ENCODE measurements at regions of chr17 and their contacts with region 1.

Region 1: GRCh38 chr17:29293890-29294579 is at the start of gene NUFIP2:
- DNase-seq: peak; percentile 100
- H3K4me3 ChIP-seq: peak within 1 kb of the TSS; percentile 72 to 92
- H3K27ac ChIP-seq: peak within 1 kb of the TSS; percentile 92 to 99
- H3K4me1 ChIP-seq: peaks cover 6% of the 10 kb centered on the region
- H3K27me3 ChIP-seq: no peaks in the 10 kb centered on the region
- CTCF ChIP-seq: peak in 3 of 4 experiments; percentile 6 to 30 (median 13)
- POLR2A ChIP-seq: peak; percentile 100
- total RNA-seq, gene NUFIP2: 21.1 to 30.6 TPM

Region 2: GRCh38 chr17:29241015-29241963 is 52.7 kb before region 1 on chr17:
- intact Hi-C with region 1: loop called (anchors 5 kb)
- DNase-seq: no peak
- H3K4me3 ChIP-seq: no peak overlapping the region
- H3K27ac ChIP-seq: no peak overlapping the region
- H3K4me1 ChIP-seq: no peaks in the 10 kb centered on the region
- H3K27me3 ChIP-seq: no peaks in the 10 kb centered on the region
- CTCF ChIP-seq: no peak
- POLR2A ChIP-seq: no peak

Region 3: DNA sequence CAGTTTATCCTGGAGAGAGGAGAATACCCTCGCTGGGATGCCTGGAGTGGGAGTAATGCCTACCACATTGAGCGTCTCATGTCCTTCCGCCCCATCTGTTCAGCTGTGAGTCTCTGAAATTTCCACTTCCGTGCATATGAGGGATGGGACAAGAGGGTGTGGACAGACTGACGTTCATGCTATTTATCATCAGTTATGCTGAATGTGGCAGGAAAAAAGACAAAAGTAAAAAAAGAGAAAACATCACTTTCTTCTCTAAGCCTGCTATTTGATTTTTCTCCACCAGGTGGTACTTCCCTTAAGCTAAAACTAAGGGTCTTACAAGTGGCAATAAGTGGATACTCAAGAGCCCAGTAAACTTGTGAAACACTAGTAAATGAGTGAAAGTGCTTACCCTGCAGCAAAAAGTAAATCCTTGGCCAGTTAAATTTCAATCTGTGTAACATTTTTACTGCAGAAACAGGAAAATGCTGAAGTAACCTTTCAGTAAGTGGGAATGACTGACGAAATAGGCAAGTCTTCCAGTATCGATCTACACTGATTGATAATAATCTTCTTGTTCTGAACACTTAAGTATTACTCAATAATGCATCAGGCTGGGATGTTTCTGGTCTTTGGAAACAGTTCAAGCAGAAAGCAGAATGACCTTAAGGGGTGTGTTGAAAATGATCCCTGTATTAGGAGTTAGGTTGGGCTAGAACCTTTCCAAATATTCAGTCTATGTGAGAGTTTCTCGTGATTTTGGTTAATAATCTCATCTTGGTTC is 41.8 kb before region 1 on chr17:
- intact Hi-C with region 1: loop called (anchors 5 kb)
- DNase-seq: no peak
- H3K4me3 ChIP-seq: no peak overlapping the region
- H3K27ac ChIP-seq: no peak overlapping the region
- H3K4me1 ChIP-seq: no peaks in the 10 kb centered on the region
- H3K27me3 ChIP-seq: no peaks in the 10 kb centered on the region
- CTCF ChIP-seq: peak in 2 of 4 experiments; percentile 34
- POLR2A ChIP-seq: no peak

Measured in prostate gland (tissue), 2 donors.